CD14-positive monocyte (primary cell): ENCODE measurements at regions of chr3 and their contacts with region 1.

Region 1: GRCh38 chr3:33717866-33718594 is at the start of gene CLASP2:
- DNase-seq: peak; percentile 87
- H3K4me3 ChIP-seq: peak within 1 kb of the TSS; percentile 64 to 90 (median 78)
- H3K4me3 Mint-ChIP-seq: peak within 1 kb of the TSS; percentile 94 to 96
- H3K27ac ChIP-seq: peak within 1 kb of the TSS; percentile 90 to 96
- H3K27ac Mint-ChIP-seq: peak within 1 kb of the TSS; percentile 91 to 99 (median 96)
- H3K4me1 ChIP-seq: peaks cover 20% of the 10 kb centered on the region in 2 donors
- H3K4me1 Mint-ChIP-seq: peaks cover 11% of the 10 kb centered on the region
- H3K27me3 ChIP-seq: no peaks in the 10 kb centered on the region
- H3K27me3 Mint-ChIP-seq: no peaks in the 10 kb centered on the region
- CTCF ChIP-seq: no peak
- polyA plus RNA-seq, gene CLASP2: 10.1 to 16.1 (median 13.9) TPM

Region 2: GRCh38 chr3:33658991-33659848 is 58.8 kb before region 1 on chr3:
- intact Hi-C with region 1: loop called (anchors 5 to 10 kb)
- DNase-seq: peak; percentile 32 to 47 (median 32)
- H3K4me3 ChIP-seq: peak overlapping the region; percentile 45 to 81 (median 65)
- H3K4me3 Mint-ChIP-seq: peak overlapping the region; percentile 71 to 88
- H3K27ac ChIP-seq: peak overlapping the region; percentile 77 to 78
- H3K27ac Mint-ChIP-seq: peak overlapping the region; percentile 4 to 93 (median 85)
- H3K4me1 ChIP-seq: peaks cover 18 to 28% of the 10 kb centered on the region in 2 donors
- H3K4me1 Mint-ChIP-seq: peaks cover 28% of the 10 kb centered on the region
- H3K27me3 ChIP-seq: no peaks in the 10 kb centered on the region
- H3K27me3 Mint-ChIP-seq: no peaks in the 10 kb centered on the region
- CTCF ChIP-seq: no peak

Region 3: GRCh38 chr3:33787328-33788009 is 69.4 kb after region 1 on chr3:
- intact Hi-C with region 1: loop called in 1 of 2 experiments (anchors 5 kb)
- DNase-seq: peak; percentile 56 to 70 (median 57)
- H3K4me3 ChIP-seq: no peak overlapping the region
- H3K4me3 Mint-ChIP-seq: peak overlapping the region; percentile 64 to 84
- H3K27ac ChIP-seq: no peak overlapping the region
- H3K27ac Mint-ChIP-seq: peak overlapping the region in 1 of 7 donors; percentile 50
- H3K4me1 ChIP-seq: peaks cover 13 to 20% of the 10 kb centered on the region in 2 donors
- H3K4me1 Mint-ChIP-seq: peaks cover 20% of the 10 kb centered on the region
- H3K27me3 ChIP-seq: no peaks in the 10 kb centered on the region
- H3K27me3 Mint-ChIP-seq: no peaks in the 10 kb centered on the region
- CTCF ChIP-seq: peak; percentile 81